Activated CD4-positive, alpha-beta memory T cell treated with anti-CD3 and anti-CD28 coated beads for 36 hours (primary cell): ENCODE measurements at regions of chr13 and their contacts with region 1.

Region 1: GRCh38 chr13:29850224-29850898 is at the start of gene UBL3:
- DNase-seq: peak; percentile 97
- H3K4me3 Mint-ChIP-seq: peak within 1 kb of the TSS; percentile 90
- H3K27ac Mint-ChIP-seq: peak within 1 kb of the TSS; percentile 98
- H3K4me1 Mint-ChIP-seq: peaks cover 46% of the 10 kb centered on the region
- H3K27me3 Mint-ChIP-seq: no peaks in the 10 kb centered on the region
- total RNA-seq, gene UBL3: 15.3 to 15.5 TPM

Region 2: GRCh38 chr13:29595380-29596063 is 254.8 kb before region 1 on chr13 and contains the start of gene SLC7A1:
- CTCF ChIA-PET with region 1: interaction called, 3 read pairs
- POLR2A ChIA-PET with region 1: interaction called, 4 read pairs
- intact Hi-C with region 1: loop called (anchors 1 kb)
- DNase-seq: peak; percentile 90
- H3K4me3 Mint-ChIP-seq: peak within 1 kb of the TSS; percentile 89
- H3K27ac Mint-ChIP-seq: peak within 1 kb of the TSS; percentile 97
- H3K4me1 Mint-ChIP-seq: peaks cover 45% of the 10 kb centered on the region
- H3K27me3 Mint-ChIP-seq: peaks cover 1% of the 10 kb centered on the region
- total RNA-seq, gene SLC7A1: 106 to 114 TPM

Region 3: DNA sequence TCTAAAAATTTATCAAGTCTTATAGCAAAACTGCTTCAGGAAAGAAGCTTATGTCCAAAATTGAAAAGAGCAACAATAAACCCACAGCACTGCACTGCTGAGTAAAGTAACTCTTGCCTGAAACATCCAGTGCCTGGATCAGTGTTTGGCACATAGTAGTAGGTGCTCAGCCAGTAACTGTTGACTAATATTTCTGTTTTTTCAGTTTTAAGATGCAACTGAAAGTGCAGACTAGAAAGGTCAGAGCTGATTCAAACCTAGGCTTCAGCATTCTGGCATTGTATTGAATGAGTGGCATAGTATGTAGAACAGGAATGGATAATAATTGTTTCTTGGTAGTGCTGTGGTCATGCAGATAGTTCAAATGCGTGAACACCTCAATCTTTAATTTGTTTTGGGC is 67.6 kb before region 1 on chr13:
- CTCF ChIA-PET with region 1: interaction called, 5 read pairs
- POLR2A ChIA-PET with region 1: interaction called, 8 read pairs
- intact Hi-C with region 1: loop called (anchors 1 kb)
- DNase-seq: peak; percentile 40
- H3K4me3 Mint-ChIP-seq: no peak overlapping the region
- H3K27ac Mint-ChIP-seq: peak overlapping the region; percentile 81
- H3K4me1 Mint-ChIP-seq: peaks cover 41% of the 10 kb centered on the region
- H3K27me3 Mint-ChIP-seq: no peaks in the 10 kb centered on the region

Region 4: DNA sequence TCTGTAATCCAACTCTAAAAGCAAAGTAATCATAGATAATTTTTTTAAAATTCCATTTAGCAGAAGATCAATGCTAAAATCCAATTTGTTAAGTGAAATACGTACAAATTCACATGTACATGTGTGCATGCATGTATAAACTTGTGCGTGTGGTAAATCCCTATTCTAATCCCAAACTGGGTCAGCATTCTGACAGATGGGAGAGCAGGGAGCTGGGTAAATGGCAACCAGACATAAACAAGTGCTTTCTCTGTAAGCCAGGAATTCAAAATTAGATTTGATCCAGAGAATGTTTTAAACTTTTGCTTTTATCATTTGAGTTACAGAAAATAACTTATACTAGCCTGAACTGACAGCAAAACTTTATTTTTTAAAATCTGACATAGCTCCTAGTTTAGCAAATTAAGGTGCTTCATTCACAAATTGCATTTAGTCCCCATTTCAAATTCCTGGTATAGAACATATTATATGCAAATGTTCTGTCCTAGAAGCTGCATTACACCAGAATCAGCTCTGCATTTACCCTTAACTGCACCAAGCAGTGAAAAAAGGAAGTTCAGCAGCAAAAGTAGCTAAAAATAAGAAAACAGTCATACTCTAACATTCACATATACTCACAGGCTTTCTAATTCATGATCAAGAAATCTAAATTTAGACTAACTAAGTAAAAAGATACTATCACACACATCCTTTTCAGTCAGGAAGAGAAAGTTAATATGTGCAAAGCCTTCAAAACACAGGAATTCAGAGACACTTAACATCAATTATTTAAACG is 32.6 kb before region 1 on chr13:
- CTCF ChIA-PET with region 1: interaction called, 3 read pairs
- POLR2A ChIA-PET with region 1: interaction called, 4 read pairs
- intact Hi-C with region 1: loop called (anchors 1 kb)
- DNase-seq: no peak
- H3K4me3 Mint-ChIP-seq: no peak overlapping the region
- H3K27ac Mint-ChIP-seq: peak overlapping the region; percentile 59
- H3K4me1 Mint-ChIP-seq: peaks cover 55% of the 10 kb centered on the region
- H3K27me3 Mint-ChIP-seq: no peaks in the 10 kb centered on the region

Region 5: GRCh38 chr13:29923554-29924481 is 73.5 kb after region 1 on chr13:
- CTCF ChIA-PET with region 1: interaction called, 19 read pairs
- POLR2A ChIA-PET with region 1: interaction called, 6 read pairs
- intact Hi-C with region 1: loop called (anchors 2 kb)
- DNase-seq: peak; percentile 87
- H3K4me3 Mint-ChIP-seq: no peak overlapping the region
- H3K27ac Mint-ChIP-seq: no peak overlapping the region
- H3K4me1 Mint-ChIP-seq: peaks cover 25% of the 10 kb centered on the region
- H3K27me3 Mint-ChIP-seq: no peaks in the 10 kb centered on the region